Activated CD4-positive, alpha-beta memory T cell treated with anti-CD3 and anti-CD28 coated beads for 36 hours (primary cell): ENCODE measurements at regions of chr15 and their contacts with region 1.

Region 1: DNA sequence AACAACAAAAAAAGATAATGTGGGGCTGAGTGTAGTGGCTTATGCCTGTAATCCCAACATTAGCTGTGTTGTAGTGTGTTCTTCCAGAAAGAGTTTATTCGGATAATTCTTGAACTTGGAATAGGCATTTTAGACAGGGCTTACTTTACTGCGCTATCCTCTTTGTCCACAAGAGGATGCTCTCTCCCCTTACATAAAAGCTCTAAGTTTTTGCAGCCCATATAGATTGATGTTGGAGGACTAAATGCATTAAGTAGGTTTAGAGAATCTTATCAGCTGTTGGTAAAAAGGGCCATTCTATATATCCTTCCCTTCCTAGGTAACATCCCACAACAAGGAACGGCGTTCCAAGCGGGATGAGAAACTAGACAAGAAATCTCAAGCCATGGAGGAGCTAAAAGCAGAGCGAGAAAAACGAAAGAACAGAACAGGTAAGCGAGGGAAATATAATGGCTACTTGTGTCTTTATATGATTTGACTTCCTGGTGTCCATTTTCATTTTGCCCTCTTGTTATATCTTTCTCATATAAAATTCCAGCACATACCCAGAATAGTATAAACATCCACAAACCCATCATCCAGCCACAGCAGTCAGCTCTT is 27.8 kb upstream of the ITPKA start:
- DNase-seq: no peak
- H3K4me3 Mint-ChIP-seq: no peak overlapping the region
- H3K27ac Mint-ChIP-seq: no peak overlapping the region
- H3K4me1 Mint-ChIP-seq: no peaks in the 10 kb centered on the region
- H3K27me3 Mint-ChIP-seq: no peaks in the 10 kb centered on the region

Region 2: GRCh38 chr15:41483115-41483514 is 17.2 kb after region 1 on chr15:
- CTCF ChIA-PET with region 1: interaction called, 32 read pairs
- POLR2A ChIA-PET with region 1: no interaction called
- intact Hi-C with region 1: no loop called
- DNase-seq: peak; percentile 69
- H3K4me3 Mint-ChIP-seq: peak overlapping the region; percentile 21
- H3K27ac Mint-ChIP-seq: peak overlapping the region; percentile 71
- H3K4me1 Mint-ChIP-seq: peaks cover 20% of the 10 kb centered on the region
- H3K27me3 Mint-ChIP-seq: no peaks in the 10 kb centered on the region

Region 3: GRCh38 chr15:41512940-41513510 is 47.1 kb after region 1 on chr15:
- CTCF ChIA-PET with region 1: interaction called, 28 read pairs
- POLR2A ChIA-PET with region 1: interaction called, 3 read pairs
- intact Hi-C with region 1: no loop called
- DNase-seq: peak; percentile 51
- H3K4me3 Mint-ChIP-seq: peak overlapping the region; percentile 52
- H3K27ac Mint-ChIP-seq: no peak overlapping the region
- H3K4me1 Mint-ChIP-seq: peaks cover 22% of the 10 kb centered on the region
- H3K27me3 Mint-ChIP-seq: peaks cover 25% of the 10 kb centered on the region

Region 4: DNA sequence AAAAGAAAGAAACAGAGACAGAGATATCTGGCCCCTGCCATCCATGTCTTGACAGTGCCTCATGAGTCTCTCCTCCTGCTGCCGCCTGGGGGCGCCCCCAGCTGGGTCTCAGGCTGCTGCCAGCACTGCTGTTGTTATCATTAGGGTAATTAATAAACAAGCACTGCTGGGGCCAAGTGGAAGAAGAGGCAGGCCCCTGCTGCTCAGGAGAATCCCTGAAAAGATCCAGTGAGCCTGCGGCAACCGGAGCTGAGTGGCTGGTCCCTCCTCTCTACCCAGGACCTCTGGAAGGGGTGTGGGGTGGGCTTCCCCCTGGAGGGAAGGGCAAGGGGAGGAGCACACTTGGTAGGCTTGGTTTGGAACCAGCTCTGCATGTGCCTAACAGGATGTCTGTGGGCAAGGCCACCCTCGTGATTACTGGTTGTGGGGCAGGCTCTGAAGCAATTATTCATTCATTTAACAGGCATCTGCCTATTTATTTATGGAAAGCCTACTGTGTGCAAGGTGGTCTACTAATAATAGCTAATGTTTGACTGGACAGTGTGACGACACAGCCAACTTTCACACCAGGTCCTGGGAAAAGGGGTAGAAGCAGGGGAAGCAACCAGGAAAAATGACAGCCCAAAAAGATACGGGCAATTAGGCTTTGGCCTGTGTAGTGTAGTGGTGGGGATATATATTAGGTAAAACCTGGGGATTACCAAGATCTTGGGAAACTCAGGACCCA is 91.9 kb after region 1 on chr15:
- CTCF ChIA-PET with region 1: interaction called, 26 read pairs
- POLR2A ChIA-PET with region 1: no interaction called
- intact Hi-C with region 1: loop called (anchors 5 kb)
- DNase-seq: peak; percentile 83
- H3K4me3 Mint-ChIP-seq: peak overlapping the region; percentile 82
- H3K27ac Mint-ChIP-seq: peak overlapping the region; percentile 70
- H3K4me1 Mint-ChIP-seq: peaks cover 17% of the 10 kb centered on the region
- H3K27me3 Mint-ChIP-seq: peaks cover 17% of the 10 kb centered on the region

Region 5: DNA sequence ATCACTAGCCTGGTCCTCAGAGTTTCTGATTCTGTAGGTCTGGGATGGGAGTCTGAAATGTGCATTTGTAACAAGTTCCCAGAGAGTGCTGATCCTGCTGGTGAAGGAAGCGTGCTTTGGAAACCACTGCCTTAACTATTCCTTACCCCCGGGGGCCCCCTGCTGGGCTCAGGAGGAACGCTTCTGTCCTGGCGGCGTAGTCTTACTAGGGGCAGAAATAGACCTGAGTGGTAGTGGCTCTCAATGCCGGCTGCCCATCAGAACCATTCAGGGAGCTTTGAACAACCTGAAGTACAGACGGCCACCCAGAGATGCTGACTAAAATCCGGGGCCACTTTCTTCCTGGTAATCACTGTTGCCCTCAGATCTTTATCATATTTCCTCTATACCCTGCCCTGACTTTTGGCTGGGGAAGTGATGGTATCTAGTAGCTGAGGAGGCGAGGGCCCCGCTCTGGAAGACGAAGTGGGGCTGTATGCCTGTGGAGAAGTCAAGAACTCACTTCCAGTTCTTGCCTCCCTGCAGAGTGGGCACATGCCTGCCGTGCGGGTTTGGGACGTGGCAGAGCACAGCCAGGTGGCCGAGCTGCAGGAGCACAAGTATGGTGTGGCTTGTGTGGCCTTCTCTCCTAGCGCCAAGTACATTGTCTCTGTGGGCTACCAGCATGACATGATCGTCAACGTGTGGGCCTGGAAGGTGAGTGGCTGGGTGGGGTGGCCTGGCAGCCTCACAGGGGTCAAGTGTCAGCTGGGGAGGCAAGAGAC is 345.7 kb after region 1 on chr15:
- CTCF ChIA-PET with region 1: interaction called, 9 read pairs
- POLR2A ChIA-PET with region 1: no interaction called
- intact Hi-C with region 1: loop called (anchors 2 kb)
- DNase-seq: peak; percentile 84
- H3K4me3 Mint-ChIP-seq: no peak overlapping the region
- H3K27ac Mint-ChIP-seq: no peak overlapping the region
- H3K4me1 Mint-ChIP-seq: peaks cover 10% of the 10 kb centered on the region
- H3K27me3 Mint-ChIP-seq: no peaks in the 10 kb centered on the region